Natural killer cell (primary cell): ENCODE measurements at regions of chr4 and their contacts with region 1.

Region 1: GRCh38 chr4:10535912-10536311 is 78.7 kb upstream of the ZNF518B start:
- DNase-seq: no peak
- ATAC-seq: no peak
- H3K4me3 ChIP-seq: no peak overlapping the region
- H3K4me3 Mint-ChIP-seq: no peak overlapping the region
- H3K27ac ChIP-seq: no peak overlapping the region
- H3K27ac Mint-ChIP-seq: no peak overlapping the region
- H3K4me1 ChIP-seq: no peaks in the 10 kb centered on the region
- H3K4me1 Mint-ChIP-seq: no peaks in the 10 kb centered on the region
- H3K27me3 ChIP-seq: no peaks in the 10 kb centered on the region
- H3K27me3 Mint-ChIP-seq: peaks cover 0 to 3% of the 10 kb centered on the region in 2 donors
- CTCF ChIP-seq: no peak

Region 2: GRCh38 chr4:9762823-9763475 is 773.0 kb before region 1 on chr4:
- intact Hi-C with region 1: loop called (anchors 5 kb)
- DNase-seq: peak; percentile 21 to 60
- ATAC-seq: no peak
- H3K4me3 ChIP-seq: no peak overlapping the region
- H3K4me3 Mint-ChIP-seq: no peak overlapping the region
- H3K27ac ChIP-seq: no peak overlapping the region
- H3K27ac Mint-ChIP-seq: no peak overlapping the region
- H3K4me1 ChIP-seq: no peaks in the 10 kb centered on the region
- H3K4me1 Mint-ChIP-seq: no peaks in the 10 kb centered on the region
- H3K27me3 ChIP-seq: no peaks in the 10 kb centered on the region
- H3K27me3 Mint-ChIP-seq: peaks cover 12 to 13% of the 10 kb centered on the region in 2 donors
- CTCF ChIP-seq: peak; percentile 51

Region 3: DNA sequence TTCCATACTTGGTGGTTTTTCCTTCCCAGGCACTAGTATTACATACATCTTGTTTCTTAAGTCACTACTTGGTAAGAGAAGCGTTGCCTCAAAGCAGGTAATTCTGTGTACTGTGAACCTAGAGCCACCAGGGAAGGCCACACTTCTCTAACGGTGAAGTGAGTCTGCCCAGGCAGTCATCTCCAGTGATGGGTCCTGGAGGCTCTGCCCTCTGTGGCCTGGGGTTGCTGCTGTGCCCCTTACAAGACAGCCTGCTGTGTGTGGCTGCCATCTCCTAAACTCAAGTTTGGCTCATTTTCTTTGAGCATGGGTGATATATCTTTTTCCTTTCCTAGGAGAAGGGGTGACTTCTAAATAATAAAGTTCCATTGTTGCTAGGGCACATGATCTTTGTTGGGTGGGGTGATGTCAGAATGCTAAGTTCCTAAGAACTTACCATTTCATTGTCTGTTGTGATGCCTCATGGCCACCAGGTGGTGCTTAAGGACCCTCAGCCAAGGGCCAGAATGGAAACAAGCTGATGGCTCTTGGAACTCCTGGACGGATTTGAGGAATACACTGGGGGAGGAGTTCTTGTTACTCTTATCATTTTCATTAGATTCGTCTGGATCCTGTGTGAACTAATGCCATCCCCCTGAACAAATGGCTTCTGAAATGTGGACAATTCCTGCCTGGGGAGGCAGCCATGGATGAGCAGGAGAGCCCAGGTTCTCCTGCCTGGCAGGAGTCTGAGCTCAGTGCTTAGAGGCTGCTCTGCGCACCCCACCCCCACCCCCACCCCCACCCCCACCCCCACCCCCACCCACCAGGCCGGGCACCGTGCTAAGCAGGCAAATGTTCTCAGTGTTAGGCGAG is 378.2 kb before region 1 on chr4:
- intact Hi-C with region 1: loop called (anchors 1 kb)
- DNase-seq: peak in 1 of 2 donors; percentile 67
- ATAC-seq: peak; percentile 64 to 71 (median 65)
- H3K4me3 ChIP-seq: no peak overlapping the region
- H3K4me3 Mint-ChIP-seq: no peak overlapping the region
- H3K27ac ChIP-seq: no peak overlapping the region
- H3K27ac Mint-ChIP-seq: no peak overlapping the region
- H3K4me1 ChIP-seq: no peaks in the 10 kb centered on the region
- H3K4me1 Mint-ChIP-seq: peaks cover 0 to 11% of the 10 kb centered on the region in 2 donors
- H3K27me3 ChIP-seq: no peaks in the 10 kb centered on the region
- H3K27me3 Mint-ChIP-seq: peaks cover 2 to 6% of the 10 kb centered on the region in 2 donors
- CTCF ChIP-seq: peak; percentile 75

Region 4: GRCh38 chr4:10164877-10165283 is 371.0 kb before region 1 on chr4:
- intact Hi-C with region 1: loop called (anchors 2 kb)
- DNase-seq: peak in 1 of 2 donors; percentile 32
- ATAC-seq: no peak
- H3K4me3 ChIP-seq: no peak overlapping the region
- H3K4me3 Mint-ChIP-seq: no peak overlapping the region
- H3K27ac ChIP-seq: no peak overlapping the region
- H3K27ac Mint-ChIP-seq: no peak overlapping the region
- H3K4me1 ChIP-seq: no peaks in the 10 kb centered on the region
- H3K4me1 Mint-ChIP-seq: peaks cover 0 to 11% of the 10 kb centered on the region in 2 donors
- H3K27me3 ChIP-seq: no peaks in the 10 kb centered on the region
- H3K27me3 Mint-ChIP-seq: no peaks in the 10 kb centered on the region
- CTCF ChIP-seq: peak; percentile 45